ENCODE measurements at regions of chrX and their contacts with region 1.

Region 1: DNA sequence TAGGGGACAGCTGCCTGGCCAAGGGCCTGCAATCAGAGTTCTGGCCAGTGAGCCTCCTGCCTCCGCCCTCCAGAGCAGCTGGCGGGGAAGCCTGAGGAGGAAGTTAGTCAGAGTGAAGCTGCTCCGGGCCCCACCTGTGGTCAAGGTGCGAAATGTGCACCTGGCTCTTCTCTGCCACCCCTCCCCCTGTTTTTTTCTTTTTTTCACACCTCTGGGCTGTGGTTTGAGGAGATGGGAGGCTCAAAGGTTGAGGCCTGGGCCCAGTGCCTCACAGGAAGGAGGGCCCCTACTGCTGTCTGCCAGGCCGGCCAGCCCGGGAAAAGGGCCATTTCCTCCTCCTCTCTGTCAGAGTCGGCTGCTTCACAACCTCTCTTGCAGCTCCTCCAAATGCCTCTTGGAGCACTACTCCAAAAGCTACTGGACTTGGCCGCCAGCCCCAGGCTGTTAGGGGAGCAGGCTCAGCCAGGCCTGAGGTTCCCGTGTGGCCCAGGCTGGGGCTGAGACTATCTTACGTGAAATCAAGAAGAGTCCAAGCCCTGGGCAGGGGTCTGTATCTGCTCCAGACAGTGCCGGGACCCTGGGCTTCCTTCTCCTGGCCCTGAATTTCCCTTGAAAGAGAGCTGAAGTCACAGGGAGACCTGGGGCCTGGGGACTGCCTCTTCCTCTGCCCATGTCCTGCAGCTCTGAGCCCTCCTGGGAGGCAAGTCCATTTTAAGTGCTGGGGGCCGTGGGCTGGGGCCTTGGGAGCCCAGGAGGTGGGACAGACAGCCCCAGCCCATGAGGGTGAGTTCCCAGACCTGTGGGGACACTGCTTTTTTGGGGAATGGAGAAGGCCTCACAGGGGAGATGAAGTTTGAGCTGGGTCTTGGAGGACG is 4.5 kb upstream of the CXCR3 start:
- DNase-seq: peak; percentile 47
- ATAC-seq: peak; percentile 95
- H3K4me3 Mint-ChIP-seq: no peak overlapping the region
- H3K27ac Mint-ChIP-seq: no peak overlapping the region
- H3K4me1 Mint-ChIP-seq: no peaks in the 10 kb centered on the region; the same call in 1 of the 2 replicates
- H3K27me3 Mint-ChIP-seq: no peaks in the 10 kb centered on the region
- CTCF ChIP-seq: no peak

Region 2: DNA sequence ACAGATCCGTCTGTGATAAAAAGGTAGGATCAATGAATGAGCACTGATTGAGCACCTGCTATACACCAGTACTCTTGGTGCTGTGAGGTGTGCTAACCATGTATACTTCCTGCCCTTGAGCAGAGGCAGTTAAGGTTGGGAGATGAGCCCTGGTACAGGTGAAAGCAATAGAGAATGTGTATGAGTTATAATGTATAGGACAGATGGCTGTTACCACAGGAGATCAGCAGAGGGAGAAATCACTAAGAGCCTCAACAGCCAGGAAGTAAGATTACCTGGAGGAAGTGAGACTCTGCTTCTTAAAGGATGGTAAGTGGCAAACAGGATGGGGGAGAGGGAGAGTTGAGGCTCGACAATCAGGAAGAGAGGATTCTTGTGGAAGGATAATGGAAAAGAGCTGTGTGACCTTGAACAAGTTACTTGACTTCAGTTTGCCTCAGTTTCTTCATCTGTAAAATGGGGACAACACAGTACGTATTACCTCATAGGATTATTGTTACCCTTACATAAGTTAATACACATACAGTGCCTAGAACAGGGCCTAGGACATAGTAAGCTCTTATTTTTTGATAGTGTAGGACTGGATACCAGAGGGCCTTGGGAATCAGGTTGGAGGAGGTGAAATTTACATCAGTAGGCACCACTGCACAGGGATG is 13.6 kb before region 1 on chrX:
- CTCF ChIA-PET with region 1: no interaction called
- POLR2A ChIA-PET with region 1: no interaction called
- DNase-seq: no peak
- ATAC-seq: no peak
- H3K4me3 Mint-ChIP-seq: no peak overlapping the region
- H3K27ac Mint-ChIP-seq: no peak overlapping the region
- H3K4me1 Mint-ChIP-seq: no peaks in the 10 kb centered on the region
- H3K27me3 Mint-ChIP-seq: no peaks in the 10 kb centered on the region
- CTCF ChIP-seq: no peak

Region 3: GRCh38 chrX:71652405-71652804 is 29.6 kb after region 1 on chrX:
- CTCF ChIA-PET with region 1: interaction called, 10 read pairs
- POLR2A ChIA-PET with region 1: no interaction called
- DNase-seq: peak; percentile 42
- ATAC-seq: peak; percentile 60; the same call in 1 of the 2 replicates
- H3K4me3 Mint-ChIP-seq: no peak overlapping the region
- H3K27ac Mint-ChIP-seq: no peak overlapping the region
- H3K4me1 Mint-ChIP-seq: 0 out of 2 replicates have a peak, but pooled peaks cover 2% of the 10 kb centered on the region
- H3K27me3 Mint-ChIP-seq: no peaks in the 10 kb centered on the region; the same call in 1 of the 2 replicates
- CTCF ChIP-seq: 0 out of 2 replicates have a peak, but pooled peaks have one; percentile 24

Measured in WTC11 (cell line).